Colonic mucosa (tissue), 4 donors: ENCODE measurements at regions of chr7 and their contacts with region 1.

Region 1: DNA sequence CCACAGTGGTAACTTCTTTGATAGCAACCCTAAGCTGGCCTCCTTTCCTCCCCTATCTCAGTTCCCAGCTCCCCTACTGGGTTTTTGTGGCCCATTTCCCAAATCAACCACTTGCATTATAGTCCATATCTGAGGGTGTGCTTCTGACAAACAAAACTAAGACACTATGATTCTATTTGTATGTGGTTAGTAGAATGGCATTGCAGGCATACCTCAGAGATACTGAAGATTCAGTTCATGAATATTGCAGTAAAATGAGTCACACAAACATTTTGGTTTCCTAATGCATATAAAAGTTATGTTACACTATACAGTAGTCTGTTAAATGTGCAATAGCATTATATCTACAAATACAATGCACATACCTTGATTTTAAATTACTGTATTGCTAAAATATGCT is 15.4 kb upstream of the TMEM243 start:
- DNase-seq: no peak
- H3K4me3 ChIP-seq: no peak overlapping the region
- H3K27ac ChIP-seq: no peak overlapping the region
- H3K4me1 ChIP-seq: no peaks in the 10 kb centered on the region
- H3K27me3 ChIP-seq: no peaks in the 10 kb centered on the region
- CTCF ChIP-seq: no peak

Region 2: DNA sequence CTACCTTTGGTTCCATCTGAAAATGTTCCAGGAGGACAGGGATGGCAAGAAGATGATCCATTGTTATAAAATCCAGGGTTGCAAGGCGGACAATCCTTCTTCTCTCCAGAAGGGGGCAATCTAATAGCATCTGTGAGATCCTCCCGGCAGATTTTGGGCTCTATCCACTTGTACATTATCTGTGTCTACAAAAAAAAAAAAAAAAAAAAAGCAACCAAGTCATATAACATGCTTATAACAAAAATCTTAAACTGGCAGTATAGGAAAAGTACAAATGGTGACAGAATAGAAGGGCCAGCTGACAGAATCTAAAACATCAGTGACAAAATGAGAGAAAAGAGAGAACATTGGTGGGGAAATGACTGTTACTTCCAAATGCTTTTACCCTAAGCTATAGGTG is 308.2 kb before region 1 on chr7:
- intact Hi-C with region 1: loop called (anchors 5 kb)
- DNase-seq: peak; percentile 42
- H3K4me3 ChIP-seq: no peak overlapping the region
- H3K27ac ChIP-seq: no peak overlapping the region
- H3K4me1 ChIP-seq: no peaks in the 10 kb centered on the region
- H3K27me3 ChIP-seq: no peaks in the 10 kb centered on the region
- CTCF ChIP-seq: peak; percentile 64

Region 3: GRCh38 chr7:86939197-86939814 is 295.6 kb before region 1 on chr7:
- intact Hi-C with region 1: loop called (anchors 5 kb)
- DNase-seq: peak; percentile 80
- H3K4me3 ChIP-seq: no peak overlapping the region
- H3K27ac ChIP-seq: no peak overlapping the region
- H3K4me1 ChIP-seq: no peaks in the 10 kb centered on the region
- H3K27me3 ChIP-seq: no peaks in the 10 kb centered on the region
- CTCF ChIP-seq: peak; percentile 83

Region 4: GRCh38 chr7:87391020-87391701 is 156.2 kb after region 1 on chr7:
- intact Hi-C with region 1: no loop called
- DNase-seq: no peak
- H3K4me3 ChIP-seq: no peak overlapping the region
- H3K27ac ChIP-seq: no peak overlapping the region
- H3K4me1 ChIP-seq: no peaks in the 10 kb centered on the region
- H3K27me3 ChIP-seq: no peaks in the 10 kb centered on the region
- CTCF ChIP-seq: no peak